ENCODE measurements at regions of chr1 and their contacts with region 1.

Region 1: DNA sequence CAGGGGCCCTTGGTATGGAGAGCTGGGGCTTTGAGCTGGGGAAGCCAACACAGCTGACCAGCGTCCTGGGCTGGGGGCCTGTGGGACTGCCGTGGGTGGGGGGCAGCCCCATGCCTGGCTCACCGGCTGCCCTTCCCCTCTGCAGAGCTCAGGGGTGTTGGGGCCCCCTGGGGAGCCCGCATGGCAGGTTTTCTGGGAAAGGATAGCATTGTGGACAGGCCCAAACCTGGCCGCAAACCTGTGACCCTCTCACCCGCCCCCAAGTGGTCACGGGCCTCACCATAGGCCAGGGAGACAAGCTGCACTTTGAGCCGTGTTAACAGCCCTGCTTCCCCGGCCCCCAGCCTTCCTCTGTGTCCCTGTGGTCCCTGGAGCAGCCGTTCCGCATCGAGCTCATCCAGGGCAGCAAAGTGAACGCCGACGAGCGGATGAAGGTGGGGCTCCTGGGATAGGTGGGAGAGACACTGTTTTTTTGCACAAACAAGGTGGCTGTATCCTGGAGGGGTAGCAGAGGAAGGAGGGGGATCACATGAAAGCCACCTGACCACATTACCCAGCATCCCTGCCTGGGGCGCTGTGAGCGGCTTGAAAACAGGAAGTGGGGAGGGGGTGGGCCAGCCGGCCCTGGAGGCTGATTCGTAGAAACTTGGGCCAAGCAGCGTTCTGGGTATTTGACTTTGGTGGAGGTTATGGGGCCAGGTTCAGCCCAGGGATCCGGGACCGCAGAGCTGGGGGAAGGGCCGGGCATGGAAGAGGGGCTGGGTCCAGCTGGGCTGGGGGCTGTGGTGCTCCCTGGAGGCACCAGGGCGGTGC is 65.9 kb downstream of the PIK3CD start:
- DNase-seq: peak; percentile 82 to 96 (median 91)
- ATAC-seq: peak; percentile 70
- H3K4me3 ChIP-seq: peak overlapping the region; percentile 74 to 76
- H3K4me3 Mint-ChIP-seq: peak overlapping the region; percentile 91
- H3K27ac ChIP-seq: peak overlapping the region; percentile 81
- H3K27ac Mint-ChIP-seq: peak overlapping the region; percentile 92
- H3K4me1 ChIP-seq: peaks cover 90% of the 10 kb centered on the region
- H3K4me1 Mint-ChIP-seq: peaks cover 75% of the 10 kb centered on the region
- H3K27me3 ChIP-seq: no peaks in the 10 kb centered on the region
- H3K27me3 Mint-ChIP-seq: no peaks in the 10 kb centered on the region
- CTCF ChIP-seq: no peak

Region 2: DNA sequence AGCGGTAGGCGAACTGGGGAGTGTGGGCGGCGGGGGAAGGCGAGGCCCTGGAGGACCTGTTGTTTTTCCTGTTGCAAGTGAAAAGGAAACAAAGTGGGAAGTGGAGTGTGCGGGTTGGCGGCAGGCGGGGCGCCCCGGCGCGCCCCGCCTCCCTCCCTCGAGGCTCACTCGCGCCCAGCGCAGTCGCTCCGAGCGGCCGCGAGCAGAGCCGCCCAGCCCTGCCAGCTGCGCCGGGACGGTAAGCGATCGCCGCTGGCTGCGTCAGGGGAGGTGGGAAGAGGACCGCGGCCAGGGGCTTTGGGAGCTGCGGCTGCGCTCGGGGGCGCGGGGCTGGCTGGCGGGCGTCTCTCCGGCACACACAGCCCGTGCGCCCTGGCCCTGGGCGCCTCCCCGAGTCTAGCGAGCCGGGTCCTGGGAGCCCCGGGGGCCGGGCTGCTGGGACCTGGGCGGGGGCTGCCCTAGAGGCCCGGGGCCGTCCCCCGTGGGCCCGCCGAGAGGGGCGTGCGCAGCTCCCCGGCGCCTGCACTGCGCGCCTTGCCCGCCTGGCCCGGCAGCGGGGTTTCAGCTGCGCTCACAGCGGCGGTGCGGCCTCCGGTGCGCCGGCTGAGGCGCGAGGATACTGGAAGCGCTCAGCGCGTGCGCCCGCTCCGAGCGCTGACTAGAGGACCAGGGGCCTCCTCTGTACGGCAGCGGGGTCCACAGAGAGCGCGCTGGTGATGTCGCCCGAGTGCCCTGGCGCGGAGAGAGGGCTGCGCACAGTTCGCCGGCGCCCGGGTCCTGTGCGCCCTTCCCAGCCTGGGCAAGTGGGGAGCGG is 65.6 kb before region 1 on chr1 and contains the start of gene PIK3CD:
- CTCF ChIA-PET with region 1: interaction called, 69 read pairs
- POLR2A ChIA-PET with region 1: interaction called, 167 read pairs
- intact Hi-C with region 1: loop called (anchors 1 to 2 kb)
- DNase-seq: peak in 8 of 9 experiments; percentile 21 to 76 (median 56)
- ATAC-seq: peak; percentile 45
- H3K4me3 ChIP-seq: peak within 1 kb of the TSS; percentile 86
- H3K4me3 Mint-ChIP-seq: peak within 1 kb of the TSS; percentile 100
- H3K27ac ChIP-seq: peak within 1 kb of the TSS; percentile 68 to 78
- H3K27ac Mint-ChIP-seq: peak within 1 kb of the TSS; percentile 99
- H3K4me1 ChIP-seq: peaks cover 59% of the 10 kb centered on the region
- H3K4me1 Mint-ChIP-seq: peaks cover 71% of the 10 kb centered on the region
- H3K27me3 ChIP-seq: no peaks in the 10 kb centered on the region
- H3K27me3 Mint-ChIP-seq: no peaks in the 10 kb centered on the region
- CTCF ChIP-seq: no peak
- total RNA-seq, gene PIK3CD: 200 to 214 TPM

Region 3: DNA sequence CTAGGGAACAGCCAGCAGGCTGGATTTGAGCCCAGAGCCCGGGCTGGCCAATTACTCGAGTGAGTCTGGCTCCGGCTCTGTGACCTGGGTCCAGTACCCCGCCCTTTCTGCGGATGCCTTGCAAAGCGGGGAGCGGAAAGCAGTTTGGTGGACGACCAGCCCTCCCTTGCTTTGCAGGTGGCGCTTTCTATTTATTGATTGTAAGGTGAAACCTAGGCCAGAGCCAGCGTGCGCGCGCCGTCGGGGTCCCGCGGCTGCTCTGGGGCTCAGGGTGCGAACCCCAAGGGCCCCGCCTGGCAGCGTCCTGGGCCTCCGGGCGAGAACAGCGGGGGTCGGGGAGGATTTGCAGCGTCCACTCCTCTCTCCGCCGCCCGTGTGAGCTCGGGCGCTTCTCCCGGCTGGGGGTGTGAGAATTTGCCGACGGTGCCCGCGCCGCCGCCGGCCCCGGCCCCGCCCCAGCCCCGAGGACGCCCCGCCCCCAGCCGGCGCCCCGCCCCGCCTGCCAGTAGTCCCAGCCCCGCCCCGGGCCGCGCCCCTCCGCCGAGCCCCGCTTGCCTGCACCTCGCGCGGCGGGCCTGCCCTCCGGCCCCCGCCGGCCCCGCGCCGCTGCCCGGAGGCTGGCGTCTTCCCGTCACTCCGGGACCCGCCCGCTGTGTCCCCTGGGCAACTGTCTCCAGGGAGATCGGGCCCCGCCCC is 28.2 kb before region 1 on chr1:
- CTCF ChIA-PET with region 1: interaction called, 14 read pairs
- POLR2A ChIA-PET with region 1: interaction called, 116 read pairs
- intact Hi-C with region 1: loop called (anchors 2 kb)
- DNase-seq: peak; percentile 67 to 91 (median 84)
- ATAC-seq: peak; percentile 77
- H3K4me3 ChIP-seq: peak overlapping the region; percentile 55 to 72
- H3K4me3 Mint-ChIP-seq: peak overlapping the region; percentile 81
- H3K27ac ChIP-seq: peak overlapping the region; percentile 33 to 78
- H3K27ac Mint-ChIP-seq: peak overlapping the region; percentile 82
- H3K4me1 ChIP-seq: peaks cover 77% of the 10 kb centered on the region
- H3K4me1 Mint-ChIP-seq: peaks cover 69% of the 10 kb centered on the region
- H3K27me3 ChIP-seq: no peaks in the 10 kb centered on the region
- H3K27me3 Mint-ChIP-seq: no peaks in the 10 kb centered on the region
- CTCF ChIP-seq: no peak

Region 4: DNA sequence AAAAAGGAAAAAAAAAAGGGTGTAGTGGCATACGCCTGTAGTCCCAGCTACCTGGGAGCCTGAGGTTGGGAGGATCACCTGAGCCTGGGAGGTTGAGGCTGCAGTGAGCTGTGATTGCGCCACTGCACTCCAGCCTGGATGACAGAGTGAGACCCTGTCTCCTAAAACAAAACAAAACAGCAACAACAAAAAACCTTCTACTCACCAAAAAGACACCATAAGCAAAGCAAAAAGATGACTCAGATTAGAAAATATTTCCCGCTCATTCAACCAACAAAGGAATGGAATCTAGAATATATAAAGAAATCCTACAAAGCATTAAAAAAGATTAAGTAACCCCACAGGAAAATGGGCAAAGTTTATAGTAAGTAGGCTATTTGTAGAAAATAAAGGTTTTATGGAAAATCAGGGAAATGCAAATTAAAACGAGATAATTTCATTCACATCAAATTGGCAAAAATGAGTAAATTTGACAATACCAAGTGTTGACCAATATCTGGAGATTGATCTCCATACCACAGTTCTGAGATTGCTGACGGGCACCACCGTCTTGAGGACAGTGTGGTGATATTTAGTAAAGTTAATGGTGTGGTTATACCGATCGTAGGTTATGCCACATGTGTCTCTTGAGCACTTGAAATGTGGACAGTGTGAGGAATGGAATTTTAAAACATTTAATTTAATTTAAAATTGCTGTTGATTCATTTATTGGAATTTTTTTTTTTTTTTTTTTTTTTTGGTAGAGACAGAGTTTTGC is 11.9 kb before region 1 on chr1:
- CTCF ChIA-PET with region 1: interaction called, 26 read pairs
- POLR2A ChIA-PET with region 1: interaction called, 48 read pairs
- intact Hi-C with region 1: no loop called
- DNase-seq: no peak
- ATAC-seq: no peak
- H3K4me3 ChIP-seq: no peak overlapping the region
- H3K4me3 Mint-ChIP-seq: peak overlapping the region; percentile 30
- H3K27ac ChIP-seq: peak overlapping the region in 1 of 2 experiments; percentile 41
- H3K27ac Mint-ChIP-seq: peak overlapping the region; percentile 87
- H3K4me1 ChIP-seq: peaks cover 64% of the 10 kb centered on the region
- H3K4me1 Mint-ChIP-seq: peaks cover 67% of the 10 kb centered on the region
- H3K27me3 ChIP-seq: no peaks in the 10 kb centered on the region
- H3K27me3 Mint-ChIP-seq: no peaks in the 10 kb centered on the region
- CTCF ChIP-seq: no peak

Region 5: DNA sequence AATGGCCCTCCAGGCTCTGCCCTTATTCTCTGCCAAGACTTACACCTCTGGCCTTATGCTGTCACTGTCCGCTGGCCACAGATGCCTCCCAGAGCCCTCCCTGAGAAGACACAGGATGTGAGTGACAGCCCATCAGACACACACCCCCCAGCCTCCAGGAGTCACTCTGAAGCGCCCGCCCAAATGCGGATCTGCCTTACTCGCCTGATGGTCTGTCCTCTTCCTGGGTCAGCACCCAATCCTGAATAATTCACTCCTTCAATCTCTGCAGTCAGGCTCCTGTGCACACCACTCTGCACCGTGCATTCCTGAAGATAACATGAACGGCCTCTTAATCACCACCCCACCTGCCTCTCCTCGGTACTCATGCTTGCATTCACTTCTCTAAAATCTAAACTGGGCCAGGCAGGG is 91.7 kb after region 1 on chr1:
- CTCF ChIA-PET with region 1: no interaction called
- POLR2A ChIA-PET with region 1: no interaction called
- intact Hi-C with region 1: no loop called
- DNase-seq: no peak
- ATAC-seq: no peak
- H3K4me3 ChIP-seq: no peak overlapping the region
- H3K4me3 Mint-ChIP-seq: no peak overlapping the region
- H3K27ac ChIP-seq: no peak overlapping the region
- H3K27ac Mint-ChIP-seq: no peak overlapping the region
- H3K4me1 ChIP-seq: peaks cover 8% of the 10 kb centered on the region
- H3K4me1 Mint-ChIP-seq: peaks cover 46% of the 10 kb centered on the region
- H3K27me3 ChIP-seq: no peaks in the 10 kb centered on the region
- H3K27me3 Mint-ChIP-seq: no peaks in the 10 kb centered on the region
- CTCF ChIP-seq: no peak

Region 6: GRCh38 chr1:9823943-9824701 is 106.7 kb after region 1 on chr1 and contains the start of gene CLSTN1:
- CTCF ChIA-PET with region 1: interaction called, 3 read pairs
- POLR2A ChIA-PET with region 1: no interaction called
- intact Hi-C with region 1: loop called in 1 of 2 experiments (anchors 5 kb)
- DNase-seq: peak; percentile 76 to 93 (median 91)
- ATAC-seq: peak; percentile 72
- H3K4me3 ChIP-seq: peak within 1 kb of the TSS; percentile 58 to 72
- H3K4me3 Mint-ChIP-seq: peak within 1 kb of the TSS; percentile 96
- H3K27ac ChIP-seq: peak within 1 kb of the TSS; percentile 37 to 76
- H3K27ac Mint-ChIP-seq: peak within 1 kb of the TSS; percentile 89
- H3K4me1 ChIP-seq: peaks cover 36% of the 10 kb centered on the region
- H3K4me1 Mint-ChIP-seq: peaks cover 43% of the 10 kb centered on the region
- H3K27me3 ChIP-seq: no peaks in the 10 kb centered on the region
- H3K27me3 Mint-ChIP-seq: no peaks in the 10 kb centered on the region
- CTCF ChIP-seq: no peak
- total RNA-seq, gene CLSTN1: 50.0 to 51.1 TPM

Measured in CD8-positive, alpha-beta T cell (primary cell).